PC-3 (cell line): ENCODE measurements at regions of chr3 and their contacts with region 1.

Region 1: GRCh38 chr3:100463002-100463401 is 29.4 kb upstream of the TMEM45A start:
- DNase-seq: peak; percentile 79
- ATAC-seq: peak; percentile 94
- H3K4me3 ChIP-seq: no peak overlapping the region; the same call in 1 of the 2 replicates
- H3K27ac ChIP-seq: no peak overlapping the region
- H3K4me1 ChIP-seq: peaks cover 11% of the 10 kb centered on the region
- H3K27me3 ChIP-seq: no peaks in the 10 kb centered on the region
- CTCF ChIP-seq: peak; percentile 93

Region 2: GRCh38 chr3:100316641-100317069 is 146.3 kb before region 1 on chr3:
- CTCF ChIA-PET with region 1: interaction called, 9 read pairs
- POLR2A ChIA-PET with region 1: no interaction called
- intact Hi-C with region 1: loop called (anchors 1 kb)
- DNase-seq: peak; percentile 77
- ATAC-seq: peak; percentile 80
- H3K4me3 ChIP-seq: no peak overlapping the region
- H3K27ac ChIP-seq: no peak overlapping the region
- H3K4me1 ChIP-seq: no peaks in the 10 kb centered on the region; the same call in 1 of the 2 replicates
- H3K27me3 ChIP-seq: no peaks in the 10 kb centered on the region
- CTCF ChIP-seq: peak; percentile 75

Region 3: GRCh38 chr3:100590114-100590839 is 127.3 kb after region 1 on chr3:
- CTCF ChIA-PET with region 1: interaction called, 71 read pairs
- POLR2A ChIA-PET with region 1: no interaction called
- intact Hi-C with region 1: loop called (anchors 1 kb)
- DNase-seq: peak; percentile 87
- ATAC-seq: peak; percentile 82
- H3K4me3 ChIP-seq: 0 out of 2 replicates have a peak overlapping the region, but pooled peaks have one; percentile 24
- H3K27ac ChIP-seq: no peak overlapping the region
- H3K4me1 ChIP-seq: peaks cover 19% of the 10 kb centered on the region
- H3K27me3 ChIP-seq: no peaks in the 10 kb centered on the region
- CTCF ChIP-seq: peak; percentile 96

Region 4: GRCh38 chr3:100634493-100635272 is 171.7 kb after region 1 on chr3:
- CTCF ChIA-PET with region 1: interaction called, 11 read pairs
- POLR2A ChIA-PET with region 1: no interaction called
- intact Hi-C with region 1: loop called (anchors 1 kb)
- DNase-seq: peak; percentile 62
- ATAC-seq: peak; percentile 78
- H3K4me3 ChIP-seq: no peak overlapping the region
- H3K27ac ChIP-seq: no peak overlapping the region
- H3K4me1 ChIP-seq: peaks cover 12% of the 10 kb centered on the region
- H3K27me3 ChIP-seq: no peaks in the 10 kb centered on the region
- CTCF ChIP-seq: peak; percentile 52

Region 5: GRCh38 chr3:100796556-100796955 is 333.6 kb after region 1 on chr3:
- CTCF ChIA-PET with region 1: interaction called, 10 read pairs
- POLR2A ChIA-PET with region 1: no interaction called
- intact Hi-C with region 1: no loop called
- DNase-seq: peak; percentile 61
- ATAC-seq: peak; percentile 40; the same call in 1 of the 2 replicates
- H3K4me3 ChIP-seq: no peak overlapping the region
- H3K27ac ChIP-seq: no peak overlapping the region
- H3K4me1 ChIP-seq: peaks cover 18% of the 10 kb centered on the region
- H3K27me3 ChIP-seq: no peaks in the 10 kb centered on the region
- CTCF ChIP-seq: peak; percentile 75